Activated T-helper 1 cell treated with anti-CD3 and anti-CD28 coated beads, Interleukin-12 subunit alpha, Interleukin-12 subunit beta, Interleukin-2, Interleukin-4 antibody, amounts not matched to agents 30 ng/mL and 10 ng/mL and 1 ng/mL, durations not matched to agents 14 hours and 24 hours and 36 hours (primary cell): ENCODE measurements at regions of chrX and their contacts with region 1.

Region 1: DNA sequence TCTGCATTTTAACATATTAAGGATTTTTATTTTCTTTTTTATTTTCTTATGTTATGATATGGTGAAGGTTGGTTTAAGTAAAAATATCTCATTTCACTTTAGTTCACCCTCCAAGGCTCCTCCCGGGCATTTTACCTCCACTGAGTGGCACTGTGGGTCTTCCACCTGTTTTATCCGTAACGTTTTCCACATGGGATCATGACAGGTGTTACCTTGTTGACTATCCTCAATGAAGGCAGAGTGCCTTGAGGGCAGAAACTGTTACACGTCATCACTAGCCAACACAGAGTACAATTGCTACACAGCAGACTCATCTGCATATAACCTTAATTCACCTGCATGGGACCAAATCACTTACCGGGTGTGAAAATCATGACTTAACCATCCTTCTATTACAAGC is 105.8 kb downstream of the GEMIN8 start:
- DNase-seq: no peak
- H3K4me3 Mint-ChIP-seq: no peak overlapping the region
- H3K27ac Mint-ChIP-seq: no peak overlapping the region
- H3K4me1 Mint-ChIP-seq: no peaks in the 10 kb centered on the region
- H3K27me3 Mint-ChIP-seq: peaks cover 7% of the 10 kb centered on the region

Region 2: DNA sequence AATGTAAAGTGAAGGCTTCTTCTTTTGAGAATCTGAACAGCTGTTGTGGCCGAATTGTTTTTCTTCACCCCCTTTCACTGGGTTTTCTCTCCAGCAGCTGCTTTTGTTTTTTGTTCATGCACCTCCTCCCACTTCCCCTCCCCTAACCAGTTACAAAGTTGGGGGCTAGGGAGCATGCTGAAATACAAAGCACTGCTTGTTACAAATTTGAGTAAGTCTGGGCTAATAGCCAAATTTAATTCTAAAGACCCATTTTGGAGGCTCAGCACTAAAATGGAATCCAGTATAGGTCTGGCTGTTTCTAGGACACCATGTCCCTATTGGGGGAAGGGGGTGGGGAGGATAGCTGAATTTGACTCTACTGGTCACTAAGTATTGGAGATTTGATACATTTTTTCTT is 17.8 kb before region 1 on chrX:
- intact Hi-C with region 1: no loop called
- DNase-seq: no peak
- H3K4me3 Mint-ChIP-seq: no peak overlapping the region
- H3K27ac Mint-ChIP-seq: no peak overlapping the region
- H3K4me1 Mint-ChIP-seq: no peaks in the 10 kb centered on the region
- H3K27me3 Mint-ChIP-seq: no peaks in the 10 kb centered on the region

Region 3: DNA sequence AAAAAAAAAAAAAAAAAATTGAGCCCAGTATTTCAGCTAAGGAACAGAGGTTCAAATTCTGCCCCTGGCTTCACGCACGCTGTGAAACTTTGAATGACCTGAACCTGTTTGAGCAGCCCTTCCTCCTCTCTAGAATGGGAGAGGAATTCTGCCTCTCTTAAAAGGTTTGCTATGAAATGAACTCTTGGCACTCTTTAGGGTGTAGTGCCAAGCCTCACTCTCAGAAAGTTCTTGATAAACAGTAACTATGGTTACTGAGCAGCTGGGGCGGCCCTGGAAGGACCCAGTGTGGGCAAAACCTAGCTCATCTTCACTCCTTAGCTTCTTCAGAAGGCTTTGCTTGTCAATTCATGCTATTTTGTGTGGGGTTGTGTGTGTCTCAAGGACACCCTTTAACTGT is 32.1 kb after region 1 on chrX:
- intact Hi-C with region 1: loop called (anchors 1 kb)
- DNase-seq: no peak
- H3K4me3 Mint-ChIP-seq: no peak overlapping the region
- H3K27ac Mint-ChIP-seq: no peak overlapping the region
- H3K4me1 Mint-ChIP-seq: no peaks in the 10 kb centered on the region
- H3K27me3 Mint-ChIP-seq: peaks cover 3% of the 10 kb centered on the region

Region 4: GRCh38 chrX:14194711-14195110 is 270.9 kb after region 1 on chrX:
- intact Hi-C with region 1: no loop called
- DNase-seq: no peak
- H3K4me3 Mint-ChIP-seq: no peak overlapping the region
- H3K27ac Mint-ChIP-seq: no peak overlapping the region
- H3K4me1 Mint-ChIP-seq: no peaks in the 10 kb centered on the region
- H3K27me3 Mint-ChIP-seq: no peaks in the 10 kb centered on the region